Activated naive CD4-positive, alpha-beta T cell treated with anti-CD3 and anti-CD28 coated beads for 36 hours (primary cell): ENCODE measurements at regions of chr10 and their contacts with region 1.

Region 1: GRCh38 chr10:46030091-46030937 is at the start of gene NCOA4:
- DNase-seq: peak; percentile 98
- H3K4me3 Mint-ChIP-seq: peak within 1 kb of the TSS; percentile 97
- H3K27ac Mint-ChIP-seq: peak within 1 kb of the TSS; percentile 92
- H3K4me1 Mint-ChIP-seq: peaks cover 49% of the 10 kb centered on the region
- H3K27me3 Mint-ChIP-seq: no peaks in the 10 kb centered on the region
- total RNA-seq, gene NCOA4: 74.2 to 75.0 TPM

Region 2: DNA sequence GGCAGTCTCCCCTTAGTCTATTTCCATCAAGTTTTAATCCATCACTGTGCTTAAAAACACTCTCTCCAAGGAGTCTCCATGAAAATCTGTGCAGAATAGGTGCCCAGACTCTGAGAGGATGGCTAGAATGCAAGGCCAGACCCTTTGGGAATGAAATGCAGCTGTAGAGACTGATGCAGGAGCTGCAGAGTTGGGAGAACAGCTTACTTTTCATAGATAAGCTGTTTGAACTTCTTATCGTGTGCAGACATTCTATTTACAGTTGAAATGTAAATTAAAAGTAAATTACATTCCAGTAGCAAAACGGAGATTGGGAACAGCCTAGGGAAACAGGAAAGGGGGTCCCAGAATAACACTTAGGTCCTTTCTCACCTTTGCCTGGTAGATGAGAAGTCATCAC is 1014.7 kb before region 1 on chr10:
- CTCF ChIA-PET with region 1: no interaction called
- intact Hi-C with region 1: no loop called
- DNase-seq: no peak
- H3K4me3 Mint-ChIP-seq: no peak overlapping the region
- H3K27ac Mint-ChIP-seq: no peak overlapping the region
- H3K4me1 Mint-ChIP-seq: no peaks in the 10 kb centered on the region
- H3K27me3 Mint-ChIP-seq: peaks cover 3% of the 10 kb centered on the region

Region 3: DNA sequence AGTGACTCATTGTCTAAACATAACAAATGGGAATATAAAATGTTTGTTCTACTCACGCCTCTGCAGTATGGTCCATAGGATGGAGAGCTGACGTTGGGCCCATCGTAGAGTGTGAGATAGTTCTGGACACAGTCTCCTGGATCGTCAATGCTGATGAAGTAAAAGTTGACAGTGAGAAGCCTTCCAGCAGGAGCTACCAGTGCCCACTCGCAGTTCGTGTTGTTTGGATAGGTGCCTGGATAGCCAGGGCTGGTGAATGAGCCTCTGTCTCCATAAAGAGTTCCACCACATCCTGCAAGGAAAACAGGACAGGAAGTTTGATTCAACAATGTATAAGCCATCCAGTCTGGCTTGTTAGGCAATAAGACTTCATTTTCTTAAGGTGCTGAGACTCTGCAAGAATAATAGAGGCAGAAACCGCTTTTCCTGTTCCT is 794.5 kb before region 1 on chr10:
- CTCF ChIA-PET with region 1: interaction called, 4 read pairs
- intact Hi-C with region 1: loop called (anchors 2 kb)
- DNase-seq: no peak
- H3K4me3 Mint-ChIP-seq: no peak overlapping the region
- H3K27ac Mint-ChIP-seq: no peak overlapping the region
- H3K4me1 Mint-ChIP-seq: peaks cover 5% of the 10 kb centered on the region
- H3K27me3 Mint-ChIP-seq: peaks cover 4% of the 10 kb centered on the region

Region 4: GRCh38 chr10:45464958-45465567 is 565.3 kb before region 1 on chr10:
- CTCF ChIA-PET with region 1: no interaction called
- intact Hi-C with region 1: loop called (anchors 1 kb)
- DNase-seq: peak; percentile 88
- H3K4me3 Mint-ChIP-seq: no peak overlapping the region
- H3K27ac Mint-ChIP-seq: no peak overlapping the region
- H3K4me1 Mint-ChIP-seq: peaks cover 16% of the 10 kb centered on the region
- H3K27me3 Mint-ChIP-seq: no peaks in the 10 kb centered on the region

Region 5: GRCh38 chr10:46092524-46093081 is 62.3 kb after region 1 on chr10:
- CTCF ChIA-PET with region 1: interaction called, 3 read pairs
- intact Hi-C with region 1: loop called (anchors 2 kb)
- DNase-seq: peak; percentile 48
- H3K4me3 Mint-ChIP-seq: peak overlapping the region; percentile 11
- H3K27ac Mint-ChIP-seq: no peak overlapping the region
- H3K4me1 Mint-ChIP-seq: peaks cover 13% of the 10 kb centered on the region
- H3K27me3 Mint-ChIP-seq: no peaks in the 10 kb centered on the region

Region 6: GRCh38 chr10:46284293-46285229 is 254.2 kb after region 1 on chr10:
- CTCF ChIA-PET with region 1: no interaction called
- intact Hi-C with region 1: loop called (anchors 5 kb)
- DNase-seq: peak; percentile 81
- H3K4me3 Mint-ChIP-seq: peak overlapping the region; percentile 91
- H3K27ac Mint-ChIP-seq: peak overlapping the region; percentile 32
- H3K4me1 Mint-ChIP-seq: peaks cover 19% of the 10 kb centered on the region
- H3K27me3 Mint-ChIP-seq: no peaks in the 10 kb centered on the region